ENCODE measurements at regions of chr6 and their contacts with region 1.

Region 1: GRCh38 chr6:16398587-16398986 is 160.2 kb downstream of the GMPR start:
- DNase-seq: no peak
- ATAC-seq: no peak
- H3K4me3 ChIP-seq: no peak overlapping the region
- H3K27ac ChIP-seq: no peak overlapping the region
- H3K4me1 ChIP-seq: no peaks in the 10 kb centered on the region
- H3K27me3 ChIP-seq: peaks cover 6 to 11% of the 10 kb centered on the region in 2 experiments; a peak in 4 of 5 replicates
- CTCF ChIP-seq: no peak
- EP300 ChIP-seq: no peak
- POLR2A ChIP-seq: no peak
- RAD21 ChIP-seq: no peak

Region 2: GRCh38 chr6:16206595-16207037 is 192.0 kb before region 1 on chr6:
- CTCF ChIA-PET with region 1: no interaction called
- POLR2A ChIA-PET with region 1: no interaction called
- in situ Hi-C with region 1: no loop called
- intact Hi-C with region 1: no loop called
- DNase-seq: peak; percentile 79 to 84 (median 79)
- ATAC-seq: peak; percentile 88
- H3K4me3 ChIP-seq: no peak overlapping the region
- H3K27ac ChIP-seq: no peak overlapping the region; the same call in 1 of the 3 replicates
- H3K4me1 ChIP-seq: peaks cover 8 to 14% of the 10 kb centered on the region in 2 experiments; a peak in 4 of 5 replicates
- H3K27me3 ChIP-seq: no peaks in the 10 kb centered on the region
- CTCF ChIP-seq: peak; percentile 88 to 98 (median 96)
- EP300 ChIP-seq: no peak; the same call in 1 of the 2 replicates
- POLR2A ChIP-seq: no peak
- RAD21 ChIP-seq: peak; percentile 97

Region 3: DNA sequence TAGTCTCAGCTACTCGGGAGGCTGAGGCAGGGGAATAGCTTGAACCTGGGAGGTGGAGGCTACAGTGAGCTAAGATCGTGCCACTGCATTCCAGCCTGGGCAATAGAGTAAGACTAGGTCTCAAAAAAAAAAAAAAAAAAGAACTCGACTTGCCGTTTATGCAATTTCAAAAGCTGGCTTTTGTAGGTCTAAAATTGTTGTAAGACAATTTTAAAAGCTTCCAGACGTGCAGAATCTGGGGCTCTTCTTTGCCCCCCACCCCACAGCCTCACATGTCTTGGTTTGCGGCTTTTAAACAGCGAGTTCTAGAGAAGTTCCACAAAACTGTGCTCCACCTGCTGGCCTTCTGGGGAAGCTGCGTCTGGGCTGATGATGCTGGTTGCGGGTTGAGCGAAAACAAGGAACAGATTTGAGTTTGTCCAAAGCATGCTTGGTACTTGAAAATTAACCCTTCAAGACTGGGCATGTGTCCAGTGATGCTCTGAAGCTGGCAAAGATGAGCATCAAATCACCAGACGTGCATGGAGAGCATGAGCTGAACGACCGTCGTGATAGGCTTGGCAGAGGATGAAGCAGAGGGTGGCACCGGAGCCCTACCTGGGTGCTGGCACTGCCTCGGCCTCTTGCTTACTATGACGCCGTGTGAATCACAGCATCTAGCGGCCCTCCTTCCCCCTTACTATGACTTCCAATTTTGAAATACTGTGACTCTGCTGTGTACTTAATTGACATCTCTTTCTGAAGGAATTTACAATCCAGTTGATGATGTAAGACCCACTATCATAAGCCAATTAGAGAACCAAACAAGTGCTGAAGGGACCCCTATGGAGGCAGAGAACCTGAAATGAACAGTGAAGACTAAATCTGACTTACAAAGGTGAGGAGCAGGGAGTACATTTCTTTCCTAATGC is 11.2 kb after region 1 on chr6:
- CTCF ChIA-PET with region 1: no interaction called
- POLR2A ChIA-PET with region 1: interaction called, 11 read pairs
- in situ Hi-C with region 1: no loop called
- intact Hi-C with region 1: no loop called
- DNase-seq: peak; percentile 53 to 77 (median 64)
- ATAC-seq: peak; percentile 96
- H3K4me3 ChIP-seq: no peak overlapping the region
- H3K27ac ChIP-seq: no peak overlapping the region
- H3K4me1 ChIP-seq: no peaks in the 10 kb centered on the region; a peak in 1 of 5 replicates
- H3K27me3 ChIP-seq: peaks cover 24 to 36% of the 10 kb centered on the region in 2 experiments; a peak in 4 of 5 replicates
- CTCF ChIP-seq: peak; percentile 86 to 93 (median 90)
- EP300 ChIP-seq: no peak
- POLR2A ChIP-seq: no peak
- RAD21 ChIP-seq: peak; percentile 80 to 87